K562 (cell line): ENCODE measurements at regions of chr1 and their contacts with region 1.

Region 1: GRCh38 chr1:181117638-181118449 is 29.3 kb downstream of the IER5 start:
- DNase-seq: no peak
- ATAC-seq: peak; percentile 15; the same call in 2 of the 3 replicates
- H3K4me3 ChIP-seq: no peak overlapping the region
- H3K27ac ChIP-seq: no peak overlapping the region
- H3K4me1 ChIP-seq: peaks cover 13 to 16% of the 10 kb centered on the region in 2 experiments
- H3K27me3 ChIP-seq: no peaks in the 10 kb centered on the region
- CTCF ChIP-seq: no peak
- EP300 ChIP-seq: no peak
- POLR2A ChIP-seq: no peak
- RAD21 ChIP-seq: no peak

Region 2: GRCh38 chr1:181073638-181074037 is 44.2 kb before region 1 on chr1:
- CTCF ChIA-PET with region 1: no interaction called
- POLR2A ChIA-PET with region 1: no interaction called
- in situ Hi-C with region 1: no loop called
- intact Hi-C with region 1: no loop called
- DNase-seq: no peak
- ATAC-seq: no peak
- H3K4me3 ChIP-seq: no peak overlapping the region
- H3K27ac ChIP-seq: no peak overlapping the region
- H3K4me1 ChIP-seq: no peaks in the 10 kb centered on the region
- H3K27me3 ChIP-seq: peaks cover 4 to 15% of the 10 kb centered on the region in 2 experiments; a peak in 4 of 5 replicates
- CTCF ChIP-seq: no peak
- EP300 ChIP-seq: no peak
- POLR2A ChIP-seq: no peak
- RAD21 ChIP-seq: no peak

Region 3: GRCh38 chr1:181105134-181106021 is 12.5 kb before region 1 on chr1:
- CTCF ChIA-PET with region 1: no interaction called
- POLR2A ChIA-PET with region 1: interaction called, 21 read pairs
- in situ Hi-C with region 1: no loop called
- intact Hi-C with region 1: no loop called
- DNase-seq: peak; percentile 97 to 99 (median 99)
- ATAC-seq: peak; percentile 95
- H3K4me3 ChIP-seq: peak overlapping the region; percentile 63
- H3K27ac ChIP-seq: peak overlapping the region; percentile 86
- H3K4me1 ChIP-seq: peaks cover 25 to 65% of the 10 kb centered on the region in 2 experiments
- H3K27me3 ChIP-seq: no peaks in the 10 kb centered on the region
- CTCF ChIP-seq: no peak
- EP300 ChIP-seq: no peak
- POLR2A ChIP-seq: peak; percentile 81
- RAD21 ChIP-seq: peak in 1 of 2 experiments; percentile 33; a peak in 2 of 4 replicates

Region 4: GRCh38 chr1:181179987-181180365 is 62.1 kb after region 1 on chr1:
- CTCF ChIA-PET with region 1: no interaction called
- POLR2A ChIA-PET with region 1: no interaction called
- in situ Hi-C with region 1: no loop called
- intact Hi-C with region 1: no loop called
- DNase-seq: no peak
- ATAC-seq: peak; percentile 56
- H3K4me3 ChIP-seq: no peak overlapping the region
- H3K27ac ChIP-seq: no peak overlapping the region
- H3K4me1 ChIP-seq: peaks cover 5 to 12% of the 10 kb centered on the region in 2 experiments; a peak in 3 of 5 replicates
- H3K27me3 ChIP-seq: peaks cover 41 to 62% of the 10 kb centered on the region in 2 experiments
- CTCF ChIP-seq: no peak
- EP300 ChIP-seq: no peak
- POLR2A ChIP-seq: no peak
- RAD21 ChIP-seq: no peak